ENCODE measurements at regions of chr7 and their contacts with region 1.

Region 1: DNA sequence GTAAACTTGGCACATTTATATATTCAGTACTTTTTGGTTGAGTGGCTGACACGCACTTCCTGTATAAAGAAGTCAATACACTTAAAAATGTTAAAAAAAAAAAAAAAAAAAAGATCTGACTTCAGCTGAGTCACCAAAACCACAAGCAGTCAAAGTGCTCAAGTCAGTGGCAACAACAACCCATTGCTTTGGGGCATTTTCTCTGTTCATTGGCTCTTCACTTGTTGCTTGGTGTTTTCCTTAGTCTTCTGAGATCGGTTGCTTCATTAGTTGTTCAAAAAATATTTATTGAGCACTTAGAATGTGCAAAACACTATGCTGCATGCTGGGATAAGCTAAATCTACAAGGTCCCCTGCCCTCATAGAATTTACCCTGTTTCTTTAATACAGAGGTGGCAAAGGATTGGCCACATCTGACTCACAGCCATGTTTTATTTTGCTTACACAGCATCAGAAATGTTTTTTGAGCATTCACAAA is 63.7 kb downstream of the ZNRF2 start:
- DNase-seq: peak; percentile 78 to 88 (median 85)
- H3K4me3 ChIP-seq: peak overlapping the region in 1 of 2 donors; percentile 23
- H3K4me3 Mint-ChIP-seq: peak overlapping the region; percentile 51 to 84 (median 76)
- H3K27ac ChIP-seq: peak overlapping the region; percentile 58
- H3K27ac Mint-ChIP-seq: peak overlapping the region; percentile 87 to 97 (median 96)
- H3K4me1 ChIP-seq: peaks cover 76% of the 10 kb centered on the region
- H3K4me1 Mint-ChIP-seq: peaks cover 42 to 75% (median 61%) of the 10 kb centered on the region in 4 donors
- H3K27me3 ChIP-seq: no peaks in the 10 kb centered on the region
- H3K27me3 Mint-ChIP-seq: no peaks in the 10 kb centered on the region

Region 2: DNA sequence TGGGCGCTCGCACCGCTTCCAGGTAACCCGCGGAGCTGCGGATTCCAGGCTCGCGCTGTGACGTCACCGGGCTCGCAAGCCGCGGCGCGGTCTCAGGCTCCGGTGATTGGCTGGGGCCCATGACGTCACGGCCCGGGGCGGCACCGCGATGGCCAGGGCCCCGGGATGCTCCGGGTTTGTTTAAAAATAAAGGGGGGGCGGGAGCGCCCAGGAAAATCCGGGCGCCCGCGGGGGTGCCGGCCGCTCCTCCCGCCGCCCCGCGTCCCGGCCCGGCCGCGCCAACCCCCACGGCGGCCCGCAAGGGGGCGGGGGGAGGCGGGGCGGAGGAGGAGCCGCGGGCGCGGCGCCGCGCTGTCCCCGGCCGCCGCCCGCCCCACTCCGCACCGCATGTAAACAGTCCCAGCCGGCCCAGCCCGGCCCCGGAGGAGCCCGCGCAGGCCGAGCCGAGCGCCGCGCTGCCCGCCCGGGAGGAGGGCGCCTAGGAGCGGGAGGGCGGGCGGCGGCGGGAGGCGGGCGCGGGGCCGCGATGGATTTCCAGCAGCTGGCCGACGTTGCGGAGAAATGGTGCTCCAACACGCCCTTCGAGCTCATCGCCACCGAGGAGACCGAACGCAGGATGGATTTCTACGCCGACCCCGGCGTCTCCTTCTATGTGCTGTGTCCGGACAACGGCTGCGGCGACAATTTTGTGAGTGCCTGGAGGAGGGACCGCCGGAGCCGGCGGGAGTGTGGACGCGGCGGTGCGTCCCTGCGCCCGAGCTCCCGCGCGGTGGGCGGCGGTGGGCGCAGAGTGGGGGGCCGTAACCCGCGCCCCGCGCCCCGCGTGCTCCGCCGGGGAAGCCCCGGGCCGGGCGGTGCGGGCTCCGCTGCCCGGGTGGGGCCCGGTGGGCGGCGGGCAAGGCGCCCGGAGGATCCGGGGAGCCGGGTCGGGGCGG is 213.2 kb before region 1 on chr7 and contains the start of gene MTURN:
- CTCF ChIA-PET with region 1: interaction called, 4 read pairs
- POLR2A ChIA-PET with region 1: interaction called, 8 read pairs
- intact Hi-C with region 1: loop called (anchors 5 kb)
- DNase-seq: peak; percentile 86 to 92 (median 89)
- H3K4me3 ChIP-seq: peak within 1 kb of the TSS; percentile 66 to 69
- H3K4me3 Mint-ChIP-seq: peak within 1 kb of the TSS; percentile 87 to 96 (median 94)
- H3K27ac ChIP-seq: peak within 1 kb of the TSS; percentile 17
- H3K27ac Mint-ChIP-seq: peak within 1 kb of the TSS; percentile 75 to 95 (median 95)
- H3K4me1 ChIP-seq: peaks cover 14% of the 10 kb centered on the region
- H3K4me1 Mint-ChIP-seq: peaks cover 5 to 23% (median 12%) of the 10 kb centered on the region in 4 donors
- H3K27me3 ChIP-seq: no peaks in the 10 kb centered on the region
- H3K27me3 Mint-ChIP-seq: no peaks in the 10 kb centered on the region
- total RNA-seq, gene MTURN: 18.1 to 19.2 TPM

Region 3: GRCh38 chr7:30226614-30227268 is 121.4 kb before region 1 on chr7:
- CTCF ChIA-PET with region 1: no interaction called
- POLR2A ChIA-PET with region 1: no interaction called
- intact Hi-C with region 1: loop called (anchors 1 kb)
- DNase-seq: no peak
- H3K4me3 ChIP-seq: no peak overlapping the region
- H3K4me3 Mint-ChIP-seq: no peak overlapping the region
- H3K27ac ChIP-seq: no peak overlapping the region
- H3K27ac Mint-ChIP-seq: peak overlapping the region in 1 of 7 donors; percentile 4
- H3K4me1 ChIP-seq: no peaks in the 10 kb centered on the region
- H3K4me1 Mint-ChIP-seq: no peaks in the 10 kb centered on the region
- H3K27me3 ChIP-seq: no peaks in the 10 kb centered on the region
- H3K27me3 Mint-ChIP-seq: peaks cover 0 to 3% of the 10 kb centered on the region in 2 donors

Region 4: GRCh38 chr7:30284298-30285066 is 63.6 kb before region 1 on chr7 and contains the start of gene ZNRF2:
- CTCF ChIA-PET with region 1: interaction called, 94 read pairs
- POLR2A ChIA-PET with region 1: interaction called, 117 read pairs
- intact Hi-C with region 1: loop called (anchors 1 kb)
- DNase-seq: peak; percentile 97 to 100 (median 99)
- H3K4me3 ChIP-seq: peak within 1 kb of the TSS; percentile 57 to 62
- H3K4me3 Mint-ChIP-seq: peak within 1 kb of the TSS; percentile 83 to 95 (median 87)
- H3K27ac ChIP-seq: peak within 1 kb of the TSS; percentile 68
- H3K27ac Mint-ChIP-seq: peak within 1 kb of the TSS; percentile 72 to 97 (median 95)
- H3K4me1 ChIP-seq: peaks cover 44% of the 10 kb centered on the region
- H3K4me1 Mint-ChIP-seq: peaks cover 32 to 55% (median 38%) of the 10 kb centered on the region in 4 donors
- H3K27me3 ChIP-seq: no peaks in the 10 kb centered on the region
- H3K27me3 Mint-ChIP-seq: peaks cover 0 to 1% of the 10 kb centered on the region in 2 donors
- total RNA-seq, gene ZNRF2: 37.3 to 39.4 TPM

Region 5: GRCh38 chr7:30322271-30323005 is 25.7 kb before region 1 on chr7:
- CTCF ChIA-PET with region 1: interaction called, 55 read pairs
- POLR2A ChIA-PET with region 1: interaction called, 78 read pairs
- intact Hi-C with region 1: loop called (anchors 1 kb)
- DNase-seq: peak in 4 of 5 donors; percentile 29 to 45 (median 37)
- H3K4me3 ChIP-seq: peak overlapping the region; percentile 32 to 39
- H3K4me3 Mint-ChIP-seq: peak overlapping the region; percentile 80 to 92 (median 89)
- H3K27ac ChIP-seq: peak overlapping the region; percentile 76
- H3K27ac Mint-ChIP-seq: peak overlapping the region; percentile 85 to 98 (median 96)
- H3K4me1 ChIP-seq: peaks cover 63% of the 10 kb centered on the region
- H3K4me1 Mint-ChIP-seq: peaks cover 53 to 82% (median 65%) of the 10 kb centered on the region in 4 donors
- H3K27me3 ChIP-seq: no peaks in the 10 kb centered on the region
- H3K27me3 Mint-ChIP-seq: no peaks in the 10 kb centered on the region

Region 6: GRCh38 chr7:30478349-30479201 is 130.5 kb after region 1 on chr7 and contains the start of gene NOD1:
- CTCF ChIA-PET with region 1: interaction called, 3 read pairs
- POLR2A ChIA-PET with region 1: interaction called, 12 read pairs
- intact Hi-C with region 1: no loop called
- DNase-seq: peak; percentile 54 to 72 (median 67)
- H3K4me3 ChIP-seq: peak within 1 kb of the TSS; percentile 70 to 98
- H3K4me3 Mint-ChIP-seq: peak within 1 kb of the TSS in 7 of 8 donors; percentile 94 to 98 (median 95)
- H3K27ac ChIP-seq: peak within 1 kb of the TSS; percentile 79
- H3K27ac Mint-ChIP-seq: peak within 1 kb of the TSS in 6 of 7 donors; percentile 77 to 96 (median 90)
- H3K4me1 ChIP-seq: peaks cover 44% of the 10 kb centered on the region
- H3K4me1 Mint-ChIP-seq: peaks cover 36 to 59% (median 41%) of the 10 kb centered on the region in 4 donors
- H3K27me3 ChIP-seq: no peaks in the 10 kb centered on the region
- H3K27me3 Mint-ChIP-seq: no peaks in the 10 kb centered on the region
- total RNA-seq, gene NOD1: 20.7 to 21.3 TPM

Region 7: GRCh38 chr7:30564243-30564892 is 216.2 kb after region 1 on chr7:
- CTCF ChIA-PET with region 1: no interaction called
- POLR2A ChIA-PET with region 1: no interaction called
- intact Hi-C with region 1: loop called (anchors 10 kb)
- DNase-seq: peak; percentile 64 to 73 (median 67)
- H3K4me3 ChIP-seq: no peak overlapping the region
- H3K4me3 Mint-ChIP-seq: no peak overlapping the region
- H3K27ac ChIP-seq: no peak overlapping the region
- H3K27ac Mint-ChIP-seq: peak overlapping the region in 3 of 7 donors; percentile 30 to 84 (median 50)
- H3K4me1 ChIP-seq: no peaks in the 10 kb centered on the region
- H3K4me1 Mint-ChIP-seq: no peaks in the 10 kb centered on the region
- H3K27me3 ChIP-seq: no peaks in the 10 kb centered on the region
- H3K27me3 Mint-ChIP-seq: no peaks in the 10 kb centered on the region